Activated CD8-positive, alpha-beta T cell treated with anti-CD3 and anti-CD28 coated beads for 36 hours (primary cell): ENCODE measurements at regions of chr20 and their contacts with region 1.

Region 1: GRCh38 chr20:10553326-10553984 is 118.3 kb downstream of the SLX4IP start:
- DNase-seq: peak; percentile 74
- ATAC-seq: peak; percentile 54
- H3K4me3 Mint-ChIP-seq: no peak overlapping the region
- H3K27ac Mint-ChIP-seq: no peak overlapping the region
- H3K4me1 Mint-ChIP-seq: peaks cover 37% of the 10 kb centered on the region
- H3K27me3 Mint-ChIP-seq: no peaks in the 10 kb centered on the region
- CTCF ChIP-seq: peak; percentile 72

Region 2: GRCh38 chr20:11204926-11205768 is 651.7 kb after region 1 on chr20:
- CTCF ChIA-PET with region 1: interaction called, 3 read pairs
- POLR2A ChIA-PET with region 1: no interaction called
- intact Hi-C with region 1: loop called (anchors 5 kb)
- DNase-seq: peak; percentile 42
- ATAC-seq: peak; percentile 45
- H3K4me3 Mint-ChIP-seq: no peak overlapping the region
- H3K27ac Mint-ChIP-seq: no peak overlapping the region
- H3K4me1 Mint-ChIP-seq: no peaks in the 10 kb centered on the region
- H3K27me3 Mint-ChIP-seq: no peaks in the 10 kb centered on the region
- CTCF ChIP-seq: peak; percentile 56